ENCODE measurements at regions of chr16 and their contacts with region 1.

Region 1: DNA sequence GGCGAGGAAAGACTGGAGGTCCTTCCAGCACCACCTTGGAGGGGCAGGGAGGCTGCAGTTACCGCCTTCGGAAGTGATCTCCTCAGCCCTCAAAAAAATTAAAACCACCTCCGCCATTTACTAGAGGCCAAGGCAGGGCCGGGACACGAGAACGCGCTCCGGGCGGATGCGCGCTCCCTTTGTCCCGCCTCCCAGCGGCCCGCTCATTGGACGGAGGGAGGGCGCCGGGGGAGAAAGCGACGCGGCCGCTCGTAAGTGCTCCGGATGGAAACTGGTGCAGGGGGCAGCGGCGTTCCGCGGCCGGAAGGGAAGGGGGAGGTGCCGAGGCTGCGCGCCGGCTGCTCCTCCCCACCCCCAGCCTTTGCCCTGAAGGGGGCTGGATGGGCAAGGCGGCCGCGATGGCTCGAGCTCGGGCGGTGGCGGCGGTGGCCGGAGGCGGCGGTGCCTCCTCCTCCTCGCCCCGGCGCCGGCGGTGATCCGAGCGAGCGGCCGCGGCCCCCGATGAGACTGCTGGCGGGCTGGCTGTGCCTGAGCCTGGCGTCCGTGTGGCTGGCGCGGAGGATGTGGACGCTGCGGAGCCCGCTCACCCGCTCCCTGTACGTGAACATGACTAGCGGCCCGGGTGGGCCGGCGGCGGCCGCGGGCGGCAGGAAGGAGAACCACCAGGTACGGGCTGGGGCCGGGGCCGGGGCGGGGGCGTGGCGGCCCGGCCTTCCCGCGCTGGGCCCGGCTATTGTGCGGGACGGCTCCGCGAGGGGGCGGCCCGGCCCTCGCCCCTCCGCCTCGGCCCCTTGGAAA is at the start of gene METTL9:
- DNase-seq: peak; percentile 97
- ATAC-seq: peak; percentile 89
- H3K4me3 ChIP-seq: peak within 1 kb of the TSS; percentile 70 to 95 (median 82)
- H3K4me3 Mint-ChIP-seq: peak within 1 kb of the TSS; percentile 88
- H3K27ac ChIP-seq: peak within 1 kb of the TSS; percentile 83 to 91
- H3K27ac Mint-ChIP-seq: peak within 1 kb of the TSS; percentile 94
- H3K4me1 ChIP-seq: peaks cover 13 to 17% of the 10 kb centered on the region in 2 donors
- H3K4me1 Mint-ChIP-seq: peaks cover 35% of the 10 kb centered on the region
- H3K27me3 ChIP-seq: no peaks in the 10 kb centered on the region
- H3K27me3 Mint-ChIP-seq: no peaks in the 10 kb centered on the region
- CTCF ChIP-seq: no peak
- total RNA-seq, gene METTL9: 57.3 and 57.7 TPM in 2 replicates

Region 2: GRCh38 chr16:21656795-21657768 is 57.6 kb after region 1 on chr16:
- CTCF ChIA-PET with region 1: interaction called, 6 read pairs
- POLR2A ChIA-PET with region 1: no interaction called
- intact Hi-C with region 1: loop called (anchors 2 kb)
- DNase-seq: peak; percentile 81
- ATAC-seq: peak; percentile 82
- H3K4me3 ChIP-seq: peak overlapping the region in 3 of 5 experiments; percentile 0 to 47 (median 44)
- H3K4me3 Mint-ChIP-seq: peak overlapping the region; percentile 79
- H3K27ac ChIP-seq: peak overlapping the region; percentile 51 to 78
- H3K27ac Mint-ChIP-seq: peak overlapping the region; percentile 88
- H3K4me1 ChIP-seq: peaks cover 74 to 77% of the 10 kb centered on the region in 2 donors
- H3K4me1 Mint-ChIP-seq: peaks cover 82% of the 10 kb centered on the region
- H3K27me3 ChIP-seq: no peaks in the 10 kb centered on the region
- H3K27me3 Mint-ChIP-seq: no peaks in the 10 kb centered on the region
- CTCF ChIP-seq: peak; percentile 92

Region 3: GRCh38 chr16:21952793-21953540 is 353.5 kb after region 1 on chr16 and contains the start of gene UQCRC2:
- CTCF ChIA-PET with region 1: no interaction called
- POLR2A ChIA-PET with region 1: no interaction called
- intact Hi-C with region 1: loop called (anchors 2 kb)
- DNase-seq: peak; percentile 96
- ATAC-seq: peak; percentile 91
- H3K4me3 ChIP-seq: peak within 1 kb of the TSS; percentile 74 to 100 (median 97)
- H3K4me3 Mint-ChIP-seq: peak within 1 kb of the TSS; percentile 98
- H3K27ac ChIP-seq: peak within 1 kb of the TSS; percentile 88 to 97
- H3K27ac Mint-ChIP-seq: peak within 1 kb of the TSS; percentile 97
- H3K4me1 ChIP-seq: peaks cover 34 to 45% of the 10 kb centered on the region in 2 donors
- H3K4me1 Mint-ChIP-seq: peaks cover 65% of the 10 kb centered on the region
- H3K27me3 ChIP-seq: no peaks in the 10 kb centered on the region
- H3K27me3 Mint-ChIP-seq: no peaks in the 10 kb centered on the region
- CTCF ChIP-seq: no peak
- total RNA-seq, gene UQCRC2: 150 and 155 TPM in 2 replicates